ENCODE measurements at regions of chr19 and their contacts with region 1.

Region 1: GRCh38 chr19:38769635-38770211 is 3.6 kb downstream of the LGALS7 start:
- DNase-seq: peak; percentile 87 to 94 (median 90)
- H3K4me3 ChIP-seq: peak overlapping the region in 1 of 2 donors; percentile 47
- H3K4me3 Mint-ChIP-seq: peak overlapping the region; percentile 37 to 71 (median 64)
- H3K27ac ChIP-seq: peak overlapping the region; percentile 48
- H3K27ac Mint-ChIP-seq: peak overlapping the region; percentile 78 to 95 (median 91)
- H3K4me1 ChIP-seq: peaks cover 6% of the 10 kb centered on the region
- H3K4me1 Mint-ChIP-seq: peaks cover 6 to 8% (median 7%) of the 10 kb centered on the region in 4 donors
- H3K27me3 ChIP-seq: no peaks in the 10 kb centered on the region
- H3K27me3 Mint-ChIP-seq: no peaks in the 10 kb centered on the region

Region 2: GRCh38 chr19:38514812-38515633 is 254.7 kb before region 1 on chr19:
- CTCF ChIA-PET with region 1: no interaction called
- POLR2A ChIA-PET with region 1: no interaction called
- intact Hi-C with region 1: no loop called
- DNase-seq: peak; percentile 74 to 79 (median 77)
- H3K4me3 ChIP-seq: no peak overlapping the region
- H3K4me3 Mint-ChIP-seq: peak overlapping the region in 3 of 8 donors; percentile 20 to 45 (median 22)
- H3K27ac ChIP-seq: no peak overlapping the region
- H3K27ac Mint-ChIP-seq: peak overlapping the region in 5 of 7 donors; percentile 35 to 57 (median 43)
- H3K4me1 ChIP-seq: peaks cover 19% of the 10 kb centered on the region
- H3K4me1 Mint-ChIP-seq: peaks cover 9 to 22% (median 16%) of the 10 kb centered on the region in 4 donors
- H3K27me3 ChIP-seq: no peaks in the 10 kb centered on the region
- H3K27me3 Mint-ChIP-seq: peaks cover 0 to 2% of the 10 kb centered on the region in 2 donors

Region 3: DNA sequence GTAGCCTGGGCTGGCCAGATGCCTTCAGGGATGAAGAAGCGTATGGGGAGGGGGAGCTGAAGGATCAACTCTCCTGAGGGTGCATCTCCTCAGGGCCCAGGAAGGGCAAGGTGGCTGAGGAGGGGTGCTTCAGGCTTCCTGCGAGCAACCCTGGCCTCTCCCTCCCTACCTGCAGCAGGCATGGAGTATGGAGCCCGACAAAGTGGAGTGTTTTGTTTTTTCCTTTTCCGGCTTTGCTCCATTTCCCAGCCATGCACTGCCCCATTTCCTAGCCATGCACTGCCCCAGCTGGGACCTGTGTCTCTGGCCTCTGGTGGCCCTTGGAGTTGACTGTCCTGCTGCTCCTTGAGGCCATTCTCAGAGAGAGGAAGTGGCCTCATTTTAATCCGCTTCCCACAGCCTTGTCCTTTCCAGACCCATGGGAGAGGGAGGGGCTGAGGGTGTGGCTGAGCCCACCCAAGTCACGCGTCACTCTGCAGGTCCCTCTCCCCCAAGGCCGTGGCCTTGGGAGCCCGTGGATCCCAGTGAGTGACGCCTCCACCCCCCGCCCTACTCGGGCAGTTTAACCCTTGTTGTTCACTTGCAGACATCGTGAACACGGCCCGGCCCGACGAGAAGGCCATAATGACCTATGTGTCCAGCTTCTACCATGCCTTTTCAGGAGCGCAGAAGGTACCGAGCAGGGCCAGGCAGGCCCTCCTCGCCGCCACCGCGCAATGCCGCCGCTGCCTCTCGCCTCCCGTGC is 59.9 kb before region 1 on chr19:
- CTCF ChIA-PET with region 1: no interaction called
- POLR2A ChIA-PET with region 1: no interaction called
- intact Hi-C with region 1: no loop called
- DNase-seq: no peak
- H3K4me3 ChIP-seq: no peak overlapping the region
- H3K4me3 Mint-ChIP-seq: no peak overlapping the region
- H3K27ac ChIP-seq: no peak overlapping the region
- H3K27ac Mint-ChIP-seq: peak overlapping the region in 2 of 7 donors; percentile 41 to 70
- H3K4me1 ChIP-seq: no peaks in the 10 kb centered on the region
- H3K4me1 Mint-ChIP-seq: peaks cover 0 to 2% (median 0%) of the 10 kb centered on the region in 4 donors
- H3K27me3 ChIP-seq: no peaks in the 10 kb centered on the region
- H3K27me3 Mint-ChIP-seq: no peaks in the 10 kb centered on the region

Region 4: DNA sequence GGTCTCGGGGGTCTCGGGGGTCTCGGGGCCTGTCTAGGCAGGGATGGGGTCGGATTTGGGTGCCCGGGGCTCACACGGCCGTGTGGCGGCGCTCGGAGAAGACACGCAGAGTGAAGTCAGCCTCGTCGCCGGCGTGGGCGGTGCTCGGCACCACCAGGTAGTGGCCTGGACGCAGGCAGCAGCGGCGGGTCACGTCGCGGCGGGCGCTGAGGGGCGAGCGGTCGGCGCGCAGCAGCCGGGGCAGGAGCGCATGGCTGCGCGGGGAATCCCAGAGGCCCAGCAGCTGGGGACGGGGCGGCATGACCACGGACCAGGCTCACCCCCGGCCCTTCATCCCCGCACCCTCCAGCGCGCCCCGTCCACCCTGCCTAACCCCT is 33.7 kb before region 1 on chr19:
- CTCF ChIA-PET with region 1: interaction called, 6 read pairs
- POLR2A ChIA-PET with region 1: interaction called, 13 read pairs
- intact Hi-C with region 1: no loop called
- DNase-seq: peak; percentile 57 to 80 (median 59)
- H3K4me3 ChIP-seq: peak overlapping the region in 1 of 2 donors; percentile 14
- H3K4me3 Mint-ChIP-seq: peak overlapping the region; percentile 27 to 77 (median 60)
- H3K27ac ChIP-seq: peak overlapping the region; percentile 30
- H3K27ac Mint-ChIP-seq: peak overlapping the region in 4 of 7 donors; percentile 30 to 88 (median 74)
- H3K4me1 ChIP-seq: peaks cover 57% of the 10 kb centered on the region
- H3K4me1 Mint-ChIP-seq: peaks cover 24 to 69% (median 42%) of the 10 kb centered on the region in 4 donors
- H3K27me3 ChIP-seq: no peaks in the 10 kb centered on the region
- H3K27me3 Mint-ChIP-seq: peaks cover 0 to 2% of the 10 kb centered on the region in 2 donors

Region 5: DNA sequence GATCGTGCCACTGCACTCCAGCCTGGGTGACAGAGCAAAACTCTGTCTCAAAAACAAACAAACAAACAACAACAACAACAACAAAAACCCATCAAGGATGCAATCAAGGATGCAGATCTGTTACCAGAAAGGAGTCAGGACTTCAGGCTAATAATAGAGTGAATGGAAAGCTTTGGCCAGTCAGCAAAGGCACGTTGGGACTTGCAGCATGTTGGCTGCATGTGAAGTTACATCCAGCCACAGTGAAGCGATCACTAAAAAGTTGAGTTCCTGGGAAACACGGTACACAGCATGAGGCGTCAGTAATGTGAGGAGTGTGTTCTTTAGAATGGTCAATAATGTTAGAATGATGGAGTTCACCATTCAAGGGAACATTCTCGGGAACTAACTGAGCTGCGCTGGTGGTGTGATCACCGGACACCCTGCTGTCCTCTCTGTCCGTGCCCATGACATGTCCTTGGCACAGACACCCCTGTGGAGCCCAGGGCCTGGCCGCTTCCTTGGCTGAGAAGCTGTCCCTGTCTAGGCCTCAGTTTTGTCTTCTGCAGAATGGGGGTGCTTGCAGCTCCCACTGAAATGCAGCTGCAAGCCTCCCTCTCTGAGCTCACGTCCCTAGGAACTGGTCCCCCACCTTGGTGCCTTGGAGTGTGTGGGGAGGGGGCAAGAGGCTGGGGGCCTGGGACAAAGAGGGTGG is 17.0 kb after region 1 on chr19:
- CTCF ChIA-PET with region 1: interaction called, 10 read pairs
- POLR2A ChIA-PET with region 1: no interaction called
- intact Hi-C with region 1: no loop called
- DNase-seq: no peak
- H3K4me3 ChIP-seq: no peak overlapping the region
- H3K4me3 Mint-ChIP-seq: no peak overlapping the region
- H3K27ac ChIP-seq: no peak overlapping the region
- H3K27ac Mint-ChIP-seq: peak overlapping the region in 3 of 7 donors; percentile 30 to 74 (median 51)
- H3K4me1 ChIP-seq: no peaks in the 10 kb centered on the region
- H3K4me1 Mint-ChIP-seq: peaks cover 0 to 2% (median 0%) of the 10 kb centered on the region in 4 donors
- H3K27me3 ChIP-seq: no peaks in the 10 kb centered on the region
- H3K27me3 Mint-ChIP-seq: no peaks in the 10 kb centered on the region

Region 6: GRCh38 chr19:38838573-38839269 is 69.0 kb after region 1 on chr19:
- CTCF ChIA-PET with region 1: interaction called, 8 read pairs
- POLR2A ChIA-PET with region 1: interaction called, 11 read pairs
- intact Hi-C with region 1: no loop called
- DNase-seq: peak in 1 of 5 donors; percentile 56
- H3K4me3 ChIP-seq: no peak overlapping the region
- H3K4me3 Mint-ChIP-seq: peak overlapping the region in 1 of 8 donors; percentile 49
- H3K27ac ChIP-seq: no peak overlapping the region
- H3K27ac Mint-ChIP-seq: peak overlapping the region in 6 of 7 donors; percentile 64 to 86 (median 78)
- H3K4me1 ChIP-seq: peaks cover 46% of the 10 kb centered on the region
- H3K4me1 Mint-ChIP-seq: peaks cover 23 to 48% (median 39%) of the 10 kb centered on the region in 4 donors
- H3K27me3 ChIP-seq: no peaks in the 10 kb centered on the region
- H3K27me3 Mint-ChIP-seq: peaks cover 0 to 1% of the 10 kb centered on the region in 2 donors

Region 7: DNA sequence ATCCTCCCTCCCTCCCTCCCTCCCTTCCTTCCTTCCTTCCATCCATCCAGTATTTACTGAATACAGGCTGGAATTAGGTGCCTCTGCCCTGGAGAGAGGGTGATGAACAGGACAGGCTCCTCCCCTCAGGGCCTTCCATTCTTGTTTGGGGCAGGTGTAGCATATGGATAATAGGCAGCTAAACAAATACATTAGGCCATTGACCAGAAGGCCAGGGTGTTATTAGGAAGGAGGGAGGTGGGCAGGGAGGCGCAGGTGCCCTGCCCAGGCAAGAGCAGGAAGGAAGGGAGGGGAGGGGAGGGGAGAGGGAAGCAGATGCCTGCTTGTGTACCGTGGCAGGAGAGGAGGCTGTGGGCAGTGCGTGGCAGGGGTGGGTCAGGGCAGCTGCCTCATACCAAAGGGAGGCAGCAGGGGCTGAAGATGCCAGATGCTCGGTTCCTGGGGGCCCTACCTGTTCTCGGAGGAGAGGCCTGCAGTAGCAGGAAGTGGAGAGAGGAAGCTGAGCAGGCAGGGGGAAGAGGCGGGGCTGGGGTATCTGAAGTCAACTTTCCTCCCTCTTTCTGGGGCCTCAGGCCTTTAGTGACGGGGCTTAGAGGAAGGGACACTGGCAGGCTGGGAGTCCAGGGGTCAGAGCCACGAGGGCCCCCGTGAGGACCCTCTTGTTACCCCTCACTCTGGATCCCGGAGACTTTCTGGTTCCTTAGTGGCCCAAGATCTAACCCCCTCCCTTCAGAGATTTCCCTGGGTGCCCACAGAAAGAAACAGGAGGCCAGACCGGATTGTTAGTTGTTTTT is 108.3 kb after region 1 on chr19 and contains the start of gene RINL:
- CTCF ChIA-PET with region 1: interaction called, 6 read pairs
- POLR2A ChIA-PET with region 1: interaction called, 17 read pairs
- intact Hi-C with region 1: no loop called
- DNase-seq: peak; percentile 68 to 82 (median 72)
- H3K4me3 ChIP-seq: peak within 1 kb of the TSS; percentile 41 to 73
- H3K4me3 Mint-ChIP-seq: peak within 1 kb of the TSS; percentile 79 to 94 (median 88)
- H3K27ac ChIP-seq: peak within 1 kb of the TSS; percentile 89
- H3K27ac Mint-ChIP-seq: peak within 1 kb of the TSS; percentile 96 to 99 (median 97)
- H3K4me1 ChIP-seq: peaks cover 49% of the 10 kb centered on the region
- H3K4me1 Mint-ChIP-seq: peaks cover 21 to 40% (median 30%) of the 10 kb centered on the region in 4 donors
- H3K27me3 ChIP-seq: no peaks in the 10 kb centered on the region
- H3K27me3 Mint-ChIP-seq: no peaks in the 10 kb centered on the region
- total RNA-seq, gene RINL: 64.4 to 65.9 TPM

Region 8: GRCh38 chr19:38899447-38900219 is 129.9 kb after region 1 on chr19 and contains the starts of genes NFKBIB and SIRT2:
- CTCF ChIA-PET with region 1: interaction called, 11 read pairs
- POLR2A ChIA-PET with region 1: interaction called, 13 read pairs
- intact Hi-C with region 1: no loop called
- DNase-seq: peak; percentile 98 to 100 (median 100)
- H3K4me3 ChIP-seq: peak within 1 kb of the TSS; percentile 71 to 87
- H3K4me3 Mint-ChIP-seq: peak within 1 kb of the TSS; percentile 92 to 98 (median 96)
- H3K27ac ChIP-seq: peak within 1 kb of the TSS; percentile 99
- H3K27ac Mint-ChIP-seq: peak within 1 kb of the TSS; percentile 90 to 100 (median 99)
- H3K4me1 ChIP-seq: peaks cover 34% of the 10 kb centered on the region
- H3K4me1 Mint-ChIP-seq: peaks cover 17 to 59% (median 39%) of the 10 kb centered on the region in 4 donors
- H3K27me3 ChIP-seq: no peaks in the 10 kb centered on the region
- H3K27me3 Mint-ChIP-seq: no peaks in the 10 kb centered on the region
- total RNA-seq, gene NFKBIB: 23.9 to 26.0 TPM
- total RNA-seq, gene SIRT2: 47.0 to 50.0 TPM

Measured in CD4-positive, alpha-beta memory T cell (primary cell).